ENCODE measurements at regions of chr1 and their contacts with region 1.

Region 1: GRCh38 chr1:210373885-210374599 is 45.3 kb downstream of the HHAT start:
- DNase-seq: peak; percentile 93
- H3K4me3 Mint-ChIP-seq: peak overlapping the region; percentile 65
- H3K27ac Mint-ChIP-seq: peak overlapping the region; percentile 96
- H3K4me1 Mint-ChIP-seq: peaks cover 21% of the 10 kb centered on the region
- H3K27me3 Mint-ChIP-seq: no peaks in the 10 kb centered on the region
- CTCF ChIP-seq: peak; percentile 83

Region 2: GRCh38 chr1:210328746-210329503 is 45.1 kb before region 1 on chr1 and contains the start of gene HHAT:
- CTCF ChIA-PET with region 1: no interaction called
- intact Hi-C with region 1: no loop called
- DNase-seq: peak; percentile 84
- H3K4me3 Mint-ChIP-seq: peak within 1 kb of the TSS; percentile 88
- H3K27ac Mint-ChIP-seq: peak within 1 kb of the TSS; percentile 69
- H3K4me1 Mint-ChIP-seq: peaks cover 10% of the 10 kb centered on the region
- H3K27me3 Mint-ChIP-seq: no peaks in the 10 kb centered on the region
- CTCF ChIP-seq: no peak
- total RNA-seq, gene HHAT: 5.5 and 5.8 TPM in 2 replicates

Region 3: DNA sequence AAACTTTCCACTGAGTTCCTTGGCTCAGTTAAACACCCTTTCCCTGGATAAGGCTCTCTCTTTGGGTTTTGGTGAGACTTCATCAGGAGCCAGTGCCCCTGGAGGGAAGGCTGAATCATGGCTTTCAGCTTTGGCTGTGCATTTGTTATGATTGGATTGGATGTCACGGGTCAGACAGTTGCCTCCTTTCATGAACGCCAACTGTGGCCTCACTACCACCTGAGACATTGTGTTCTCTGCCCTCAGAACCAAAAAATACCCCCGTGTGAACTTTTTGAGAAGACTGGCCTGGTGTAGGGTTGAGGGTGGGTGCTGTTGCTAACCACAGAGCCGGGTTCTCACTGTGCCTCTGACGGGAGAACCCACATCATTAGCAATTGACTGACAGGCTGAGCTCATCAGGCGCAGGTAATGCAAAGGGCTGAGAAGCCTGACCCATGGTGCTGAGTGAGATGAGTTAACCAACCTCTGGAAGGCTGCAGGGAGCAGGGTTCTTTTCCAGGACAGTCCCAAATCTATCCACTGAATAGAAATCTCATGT is 20.3 kb after region 1 on chr1:
- CTCF ChIA-PET with region 1: interaction called, 17 read pairs
- intact Hi-C with region 1: loop called (anchors 2 kb)
- DNase-seq: no peak
- H3K4me3 Mint-ChIP-seq: no peak overlapping the region
- H3K27ac Mint-ChIP-seq: no peak overlapping the region
- H3K4me1 Mint-ChIP-seq: peaks cover 14% of the 10 kb centered on the region
- H3K27me3 Mint-ChIP-seq: no peaks in the 10 kb centered on the region
- CTCF ChIP-seq: no peak

Measured in Calu3 (cell line).